Activated CD4-positive, alpha-beta memory T cell treated with anti-CD3 and anti-CD28 coated beads for 36 hours (primary cell): ENCODE measurements at regions of chr12 and their contacts with region 1.

Region 1: GRCh38 chr12:67698672-67699581 is 50.4 kb downstream of the DYRK2 start:
- DNase-seq: peak; percentile 77
- H3K4me3 Mint-ChIP-seq: peak overlapping the region; percentile 13
- H3K27ac Mint-ChIP-seq: peak overlapping the region; percentile 46
- H3K4me1 Mint-ChIP-seq: peaks cover 49% of the 10 kb centered on the region
- H3K27me3 Mint-ChIP-seq: peaks cover 8% of the 10 kb centered on the region

Region 2: DNA sequence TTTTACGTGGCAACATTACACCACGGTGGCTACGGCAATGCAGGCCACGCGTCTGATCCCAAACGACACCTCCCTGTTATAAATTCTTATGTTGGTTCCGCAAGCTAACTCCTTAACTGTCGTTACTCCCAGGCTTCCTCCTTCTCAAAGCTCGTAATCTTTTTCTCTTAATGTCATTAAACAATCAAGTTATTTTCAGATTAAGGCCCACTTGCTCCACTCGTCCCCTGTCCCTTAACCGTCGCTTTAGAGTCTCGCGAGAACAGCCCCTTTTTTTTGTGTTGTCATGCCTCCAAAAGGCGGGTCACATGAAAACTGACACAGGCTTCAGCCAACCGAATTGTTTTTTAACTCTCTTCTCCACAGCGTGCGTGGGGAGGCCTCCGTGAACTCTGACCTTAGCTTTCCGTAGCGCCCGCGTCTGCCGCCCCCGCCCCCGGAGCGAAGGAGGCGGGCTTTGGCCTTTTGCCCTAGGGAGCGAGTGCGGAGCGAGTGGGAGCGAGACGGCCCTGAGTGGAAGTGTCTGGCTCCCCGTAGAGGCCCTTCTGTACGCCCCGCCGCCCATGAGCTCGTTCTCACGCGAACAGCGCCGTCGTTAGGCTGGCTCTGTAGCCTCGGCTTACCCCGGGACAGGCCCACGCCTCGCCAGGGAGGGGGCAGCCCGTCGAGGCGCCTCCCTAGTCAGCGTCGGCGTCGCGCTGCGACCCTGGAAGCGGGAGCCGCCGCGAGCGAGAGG is 429.9 kb before region 1 on chr12 and contains the start of gene CAND1:
- CTCF ChIA-PET with region 1: no interaction called
- POLR2A ChIA-PET with region 1: no interaction called
- intact Hi-C with region 1: loop called (anchors 2 kb)
- DNase-seq: peak; percentile 96
- H3K4me3 Mint-ChIP-seq: peak within 1 kb of the TSS; percentile 95
- H3K27ac Mint-ChIP-seq: peak within 1 kb of the TSS; percentile 98
- H3K4me1 Mint-ChIP-seq: peaks cover 31% of the 10 kb centered on the region
- H3K27me3 Mint-ChIP-seq: no peaks in the 10 kb centered on the region
- total RNA-seq, gene CAND1: 213 to 219 TPM

Region 3: GRCh38 chr12:67452119-67452805 is 246.7 kb before region 1 on chr12:
- CTCF ChIA-PET with region 1: no interaction called
- POLR2A ChIA-PET with region 1: no interaction called
- intact Hi-C with region 1: loop called (anchors 2 kb)
- DNase-seq: peak; percentile 42
- H3K4me3 Mint-ChIP-seq: peak overlapping the region; percentile 1
- H3K27ac Mint-ChIP-seq: no peak overlapping the region
- H3K4me1 Mint-ChIP-seq: peaks cover 48% of the 10 kb centered on the region
- H3K27me3 Mint-ChIP-seq: peaks cover 4% of the 10 kb centered on the region

Region 4: DNA sequence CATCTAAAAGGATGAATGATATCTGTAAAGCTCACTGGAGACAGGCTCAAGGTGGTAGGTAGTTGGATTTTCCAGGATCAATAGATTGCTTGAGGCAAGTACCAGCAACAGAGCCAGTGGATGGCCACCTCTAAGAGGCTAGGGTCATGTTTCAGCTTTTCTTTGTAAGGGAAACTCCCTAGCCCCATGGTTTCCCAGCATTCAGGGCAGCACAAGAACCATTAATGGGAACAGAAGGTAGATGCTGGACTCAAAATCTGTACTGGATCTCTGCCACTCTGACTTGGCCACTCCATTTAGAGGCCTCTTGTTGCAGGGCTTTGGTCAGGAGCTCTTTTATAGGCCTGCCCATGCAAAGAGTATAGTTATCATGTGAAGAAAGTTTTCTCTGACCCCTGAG is 126.4 kb before region 1 on chr12:
- CTCF ChIA-PET with region 1: no interaction called
- POLR2A ChIA-PET with region 1: no interaction called
- intact Hi-C with region 1: no loop called
- DNase-seq: no peak
- H3K4me3 Mint-ChIP-seq: no peak overlapping the region
- H3K27ac Mint-ChIP-seq: no peak overlapping the region
- H3K4me1 Mint-ChIP-seq: peaks cover 4% of the 10 kb centered on the region
- H3K27me3 Mint-ChIP-seq: no peaks in the 10 kb centered on the region

Region 5: DNA sequence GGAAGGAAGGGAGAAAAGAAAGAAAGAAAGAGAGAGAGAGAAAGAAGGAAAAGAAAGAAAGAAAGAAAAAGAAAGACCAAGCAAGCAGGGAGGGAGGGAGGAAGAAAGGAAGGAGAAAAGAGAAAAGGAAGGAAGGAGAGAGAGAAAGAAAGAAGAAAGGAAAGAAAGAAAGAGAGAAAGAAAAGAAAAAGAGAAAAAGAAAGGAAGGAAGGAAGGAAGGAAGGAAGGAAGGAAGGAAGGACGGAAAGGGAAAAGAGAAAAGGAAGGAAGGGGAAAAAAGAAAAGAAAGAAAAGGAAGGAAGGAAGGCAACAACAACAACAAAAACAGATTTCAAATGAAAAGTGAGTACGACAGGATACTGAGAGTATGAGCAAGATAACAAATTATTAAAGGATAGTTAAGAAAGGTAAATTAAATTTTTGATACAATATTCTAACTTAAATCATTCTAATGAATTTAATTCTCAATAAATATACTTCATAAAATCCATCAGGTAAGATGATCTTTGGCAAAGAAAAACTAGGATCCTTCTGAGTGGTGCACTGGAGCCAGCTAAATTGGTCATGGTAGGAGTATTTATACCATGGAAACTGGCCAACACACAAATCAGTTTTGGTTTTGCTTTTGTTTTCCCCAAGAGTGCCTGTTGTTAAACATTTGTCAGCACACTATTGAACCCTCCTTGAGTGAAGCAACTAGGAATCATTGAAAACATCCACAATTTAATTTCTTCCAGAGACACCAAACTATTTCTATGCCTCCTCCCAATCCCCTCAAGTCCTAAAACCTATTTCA is 106.5 kb before region 1 on chr12:
- CTCF ChIA-PET with region 1: no interaction called
- POLR2A ChIA-PET with region 1: no interaction called
- intact Hi-C with region 1: loop called (anchors 5 kb)
- DNase-seq: no peak
- H3K4me3 Mint-ChIP-seq: no peak overlapping the region
- H3K27ac Mint-ChIP-seq: peak overlapping the region; percentile 67
- H3K4me1 Mint-ChIP-seq: peaks cover 47% of the 10 kb centered on the region
- H3K27me3 Mint-ChIP-seq: no peaks in the 10 kb centered on the region

Region 6: GRCh38 chr12:67617619-67618018 is 81.3 kb before region 1 on chr12:
- CTCF ChIA-PET with region 1: no interaction called
- POLR2A ChIA-PET with region 1: no interaction called
- intact Hi-C with region 1: no loop called
- DNase-seq: no peak
- H3K4me3 Mint-ChIP-seq: no peak overlapping the region
- H3K27ac Mint-ChIP-seq: no peak overlapping the region
- H3K4me1 Mint-ChIP-seq: peaks cover 6% of the 10 kb centered on the region
- H3K27me3 Mint-ChIP-seq: no peaks in the 10 kb centered on the region

Region 7: DNA sequence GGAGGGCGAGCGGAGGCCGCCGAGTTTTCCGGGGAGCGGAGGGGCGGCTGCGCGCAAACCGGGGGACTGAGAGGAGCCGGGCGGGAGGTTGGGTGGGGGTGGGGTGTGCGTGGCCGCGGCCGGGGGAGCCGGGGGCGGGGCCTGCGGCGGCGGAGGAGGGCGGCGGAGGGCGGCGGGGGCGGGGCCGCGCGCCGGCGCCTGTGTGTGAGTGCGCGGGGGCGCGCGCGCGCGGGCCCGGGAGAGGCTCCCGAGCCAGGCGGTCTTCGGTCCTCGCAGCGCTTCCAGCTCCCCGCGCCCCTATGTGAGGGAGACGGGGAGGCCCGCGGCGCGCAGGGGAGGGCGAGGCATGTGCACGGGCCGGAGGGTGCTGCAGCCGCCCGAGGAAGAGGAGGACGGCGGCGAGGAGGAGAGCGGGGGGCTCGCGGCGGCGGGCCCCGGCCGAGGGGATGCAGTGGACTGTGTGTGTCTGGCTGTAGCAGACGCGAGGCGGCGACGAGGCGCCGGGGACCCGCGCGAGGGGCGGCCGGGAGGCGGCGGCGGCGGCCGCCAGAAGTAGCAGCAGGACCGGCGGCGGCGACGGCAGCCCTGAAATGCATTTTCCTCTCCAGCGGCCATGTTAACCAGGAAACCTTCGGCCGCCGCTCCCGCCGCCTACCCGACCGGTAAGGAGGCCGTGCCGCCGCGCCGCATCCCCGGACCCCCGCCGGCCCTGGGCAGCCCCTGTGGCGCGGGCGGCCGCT is 50.2 kb before region 1 on chr12 and contains the start of gene DYRK2:
- CTCF ChIA-PET with region 1: no interaction called
- POLR2A ChIA-PET with region 1: no interaction called
- intact Hi-C with region 1: loop called (anchors 1 kb)
- DNase-seq: peak; percentile 75
- H3K4me3 Mint-ChIP-seq: peak within 1 kb of the TSS; percentile 85
- H3K27ac Mint-ChIP-seq: peak within 1 kb of the TSS; percentile 79
- H3K4me1 Mint-ChIP-seq: peaks cover 45% of the 10 kb centered on the region
- H3K27me3 Mint-ChIP-seq: no peaks in the 10 kb centered on the region
- total RNA-seq, gene DYRK2: 22.8 to 24.2 TPM

Region 8: DNA sequence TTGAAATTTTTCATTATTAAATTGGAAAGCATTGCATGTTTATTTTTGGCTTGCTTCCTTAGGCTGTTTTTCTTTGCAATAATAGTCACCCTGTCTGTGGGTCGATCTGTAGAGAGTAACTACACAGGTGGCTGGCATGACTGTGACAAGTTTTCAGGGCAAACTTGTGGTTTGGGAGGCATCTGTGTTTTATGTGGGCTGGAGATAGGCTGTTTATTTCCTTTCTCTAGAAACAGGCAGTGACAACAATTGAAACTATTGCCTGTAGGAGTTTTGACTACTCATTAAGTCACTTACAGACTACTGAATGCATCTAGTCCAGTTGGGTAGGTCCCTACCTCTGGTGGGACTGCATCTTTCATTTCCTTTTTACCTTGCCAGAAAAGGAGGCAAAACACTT is 105.2 kb after region 1 on chr12:
- CTCF ChIA-PET with region 1: no interaction called
- POLR2A ChIA-PET with region 1: no interaction called
- intact Hi-C with region 1: loop called (anchors 1 kb)
- DNase-seq: peak; percentile 80
- H3K4me3 Mint-ChIP-seq: no peak overlapping the region
- H3K27ac Mint-ChIP-seq: no peak overlapping the region
- H3K4me1 Mint-ChIP-seq: peaks cover 31% of the 10 kb centered on the region
- H3K27me3 Mint-ChIP-seq: no peaks in the 10 kb centered on the region

Region 9: DNA sequence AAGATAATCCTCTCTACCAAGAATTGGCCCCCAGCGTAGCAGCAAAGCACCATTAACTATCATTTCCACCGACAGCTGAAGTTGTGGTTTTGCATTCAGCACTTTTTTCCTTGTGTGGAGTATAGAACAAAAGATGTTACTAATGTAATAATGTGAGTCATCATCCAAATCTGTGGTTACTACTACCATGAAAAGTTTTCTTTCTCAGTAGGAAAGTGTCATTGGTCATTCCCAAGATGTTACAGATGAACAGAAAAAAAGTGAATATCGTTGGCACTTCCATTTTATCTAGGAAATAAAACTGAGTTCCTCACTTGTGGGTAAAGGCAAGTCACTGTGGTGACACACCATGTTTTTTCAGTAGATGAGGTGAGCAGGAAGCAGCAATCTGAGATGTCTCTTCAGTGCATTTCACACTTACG is 490.9 kb after region 1 on chr12:
- CTCF ChIA-PET with region 1: no interaction called
- POLR2A ChIA-PET with region 1: no interaction called
- intact Hi-C with region 1: loop called (anchors 1 kb)
- DNase-seq: peak; percentile 59
- H3K4me3 Mint-ChIP-seq: no peak overlapping the region
- H3K27ac Mint-ChIP-seq: no peak overlapping the region
- H3K4me1 Mint-ChIP-seq: peaks cover 15% of the 10 kb centered on the region
- H3K27me3 Mint-ChIP-seq: peaks cover 2% of the 10 kb centered on the region